AG04449 (cell line): ENCODE measurements at regions of chr12 and their contacts with region 1.

Region 1: DNA sequence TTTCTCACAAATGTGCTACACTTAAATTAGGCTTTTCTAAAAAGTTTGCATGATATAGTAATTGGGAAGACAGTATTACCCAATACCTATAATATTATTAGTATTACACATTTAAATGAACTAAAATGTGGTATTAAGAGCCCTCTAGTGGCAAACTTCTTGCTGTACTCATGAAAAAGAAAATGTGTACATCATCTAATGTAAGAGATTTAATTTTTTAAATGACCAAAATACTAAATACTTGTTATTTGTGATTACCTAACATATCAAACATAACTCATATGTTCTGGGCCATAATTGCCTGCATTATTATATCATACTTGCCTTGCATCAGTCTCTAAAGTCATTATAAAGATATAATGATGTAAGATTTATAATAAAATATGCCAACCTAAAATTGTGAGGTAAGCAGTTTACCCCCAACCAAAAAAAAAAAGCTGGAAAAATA is 64.2 kb downstream of the DNAI7 start:
- DNase-seq: peak; percentile 14
- H3K4me3 ChIP-seq: no peak overlapping the region
- CTCF ChIP-seq: peak; percentile 5

Region 2: GRCh38 chr12:24931666-24932405 is 198.9 kb before region 1 on chr12:
- CTCF ChIA-PET with region 1: no interaction called
- POLR2A ChIA-PET with region 1: no interaction called
- DNase-seq: no peak
- H3K4me3 ChIP-seq: no peak overlapping the region
- CTCF ChIP-seq: no peak

Region 3: DNA sequence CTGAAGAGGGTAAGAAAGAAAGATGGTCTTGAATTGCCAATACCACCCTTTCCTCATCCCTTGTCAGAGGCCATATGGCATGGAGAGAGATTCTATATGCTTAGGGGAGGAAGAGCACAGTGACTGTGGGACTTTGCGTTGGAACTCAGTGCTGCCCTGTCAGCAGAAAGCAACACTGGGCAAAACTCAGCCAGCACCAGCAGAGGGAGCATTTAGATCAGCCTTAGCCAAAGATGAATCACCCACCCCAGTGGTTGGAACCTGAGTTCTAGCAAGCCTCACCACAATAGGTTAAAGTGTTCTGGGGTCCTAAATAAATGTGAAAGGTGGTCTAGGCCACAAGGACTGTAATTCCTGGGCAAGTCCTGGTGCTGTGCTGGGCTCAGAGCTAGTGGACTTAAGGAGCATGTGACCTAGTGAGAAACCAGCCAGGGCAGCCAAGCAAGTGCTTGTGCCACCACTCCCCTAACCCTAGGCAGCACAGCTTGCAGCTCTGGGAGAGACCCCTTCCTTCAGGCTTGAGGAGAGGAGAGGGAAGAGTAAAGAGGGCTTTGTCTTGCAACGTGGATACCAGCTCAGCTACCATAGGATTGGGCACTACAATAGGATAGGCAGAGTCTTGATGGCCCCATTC is 170.4 kb before region 1 on chr12:
- CTCF ChIA-PET with region 1: interaction called, 30 read pairs
- POLR2A ChIA-PET with region 1: no interaction called
- DNase-seq: no peak
- H3K4me3 ChIP-seq: no peak overlapping the region
- CTCF ChIP-seq: peak; percentile 87

Region 4: DNA sequence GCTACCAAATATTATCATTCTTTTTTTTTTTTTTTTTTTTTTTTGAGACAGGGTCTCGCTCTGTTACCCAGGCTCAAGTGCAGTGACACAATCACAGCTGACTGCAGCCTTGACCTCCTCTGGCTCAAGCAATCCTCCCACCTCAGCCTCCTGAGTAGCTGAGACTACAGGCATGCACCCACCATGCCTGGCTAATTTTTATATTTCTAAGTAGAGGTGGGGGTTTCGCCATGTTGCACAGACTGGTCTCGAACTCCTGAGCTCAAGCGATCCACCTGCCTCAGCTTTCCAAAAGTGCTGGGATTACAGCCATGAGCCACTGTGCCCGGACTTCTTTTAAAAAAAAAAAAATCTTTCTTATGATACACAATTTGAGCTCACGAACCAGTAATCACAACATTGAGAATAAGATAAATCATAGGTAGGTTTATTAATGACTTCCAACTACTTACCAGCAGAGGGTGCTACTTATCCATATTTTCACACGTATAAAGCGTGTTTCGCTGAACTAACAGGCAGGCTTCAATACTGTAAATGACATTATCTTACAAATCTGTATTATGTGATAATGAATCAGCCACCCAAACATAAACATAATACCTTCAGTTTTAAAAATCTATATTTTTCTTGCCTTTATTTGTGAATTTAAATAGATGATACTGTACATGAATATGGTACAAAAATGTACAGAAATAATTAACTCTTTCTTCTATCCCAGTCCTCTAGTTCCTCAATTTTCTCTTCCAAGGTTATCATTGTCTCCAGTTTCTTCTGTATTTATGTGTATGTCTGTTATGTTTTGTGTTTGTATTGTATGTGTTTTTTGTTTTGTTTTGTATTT is 139.3 kb before region 1 on chr12:
- CTCF ChIA-PET with region 1: interaction called, 143 read pairs
- POLR2A ChIA-PET with region 1: no interaction called
- DNase-seq: no peak
- H3K4me3 ChIP-seq: no peak overlapping the region
- CTCF ChIP-seq: peak; percentile 19

Region 5: DNA sequence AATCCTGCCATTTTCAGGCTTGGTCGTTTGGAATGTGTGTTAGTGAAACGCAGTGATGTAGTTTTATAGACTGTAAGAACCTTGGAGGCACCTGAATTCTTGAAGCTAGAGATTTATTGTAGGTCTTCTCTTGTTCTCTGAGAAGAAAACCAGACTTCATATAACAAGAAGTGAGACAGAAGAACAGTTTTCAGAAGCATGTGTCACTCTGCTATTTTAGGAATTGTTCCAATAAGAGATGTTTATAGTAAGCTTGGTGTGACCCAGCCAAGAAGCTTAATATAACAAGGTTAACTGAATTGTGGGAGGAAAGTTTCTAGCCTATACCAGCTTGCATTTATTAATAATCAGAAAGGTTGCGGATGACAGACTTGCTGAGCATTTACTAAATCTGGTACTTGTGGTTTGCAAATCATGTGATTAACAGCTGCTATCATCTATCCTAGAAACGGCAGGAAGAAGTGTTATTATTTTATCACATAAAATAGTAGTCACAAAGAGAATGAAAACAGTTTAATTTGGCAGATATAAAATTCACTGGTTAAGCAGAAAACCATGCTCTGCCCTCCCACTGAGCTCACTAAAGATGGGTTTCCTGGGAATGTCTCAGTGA is 132.7 kb before region 1 on chr12:
- CTCF ChIA-PET with region 1: interaction called, 143 read pairs
- POLR2A ChIA-PET with region 1: interaction called, 3 read pairs
- DNase-seq: peak; percentile 84
- H3K4me3 ChIP-seq: no peak overlapping the region
- CTCF ChIP-seq: no peak

Region 6: GRCh38 chr12:25119020-25119419 is 11.7 kb before region 1 on chr12:
- CTCF ChIA-PET with region 1: interaction called, 15 read pairs
- POLR2A ChIA-PET with region 1: no interaction called
- DNase-seq: no peak
- H3K4me3 ChIP-seq: no peak overlapping the region
- CTCF ChIP-seq: no peak

Region 7: DNA sequence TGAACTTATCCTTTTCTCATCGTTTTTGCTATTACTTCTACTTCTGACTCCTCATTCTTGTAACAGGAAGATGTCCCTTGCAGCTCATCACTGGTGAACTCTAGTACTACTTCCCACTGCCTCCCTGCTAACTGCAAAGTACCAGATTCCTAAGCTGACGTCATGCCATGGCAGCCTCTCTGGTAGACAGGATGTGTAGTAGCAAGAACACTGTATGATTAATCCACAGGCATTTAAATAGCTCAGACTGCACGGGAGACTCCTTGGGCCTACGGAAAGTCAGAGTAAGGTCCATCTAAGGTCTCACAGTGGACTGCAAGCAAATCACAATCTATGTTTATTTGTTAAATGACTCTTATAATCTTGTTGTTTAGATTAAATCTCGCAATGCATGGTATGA is 20.7 kb after region 1 on chr12:
- CTCF ChIA-PET with region 1: interaction called, 13 read pairs
- POLR2A ChIA-PET with region 1: no interaction called
- DNase-seq: peak; percentile 98
- H3K4me3 ChIP-seq: no peak overlapping the region
- CTCF ChIP-seq: no peak